Natural killer cell (primary cell): ENCODE measurements at regions of chr9 and their contacts with region 1.

Region 1: DNA sequence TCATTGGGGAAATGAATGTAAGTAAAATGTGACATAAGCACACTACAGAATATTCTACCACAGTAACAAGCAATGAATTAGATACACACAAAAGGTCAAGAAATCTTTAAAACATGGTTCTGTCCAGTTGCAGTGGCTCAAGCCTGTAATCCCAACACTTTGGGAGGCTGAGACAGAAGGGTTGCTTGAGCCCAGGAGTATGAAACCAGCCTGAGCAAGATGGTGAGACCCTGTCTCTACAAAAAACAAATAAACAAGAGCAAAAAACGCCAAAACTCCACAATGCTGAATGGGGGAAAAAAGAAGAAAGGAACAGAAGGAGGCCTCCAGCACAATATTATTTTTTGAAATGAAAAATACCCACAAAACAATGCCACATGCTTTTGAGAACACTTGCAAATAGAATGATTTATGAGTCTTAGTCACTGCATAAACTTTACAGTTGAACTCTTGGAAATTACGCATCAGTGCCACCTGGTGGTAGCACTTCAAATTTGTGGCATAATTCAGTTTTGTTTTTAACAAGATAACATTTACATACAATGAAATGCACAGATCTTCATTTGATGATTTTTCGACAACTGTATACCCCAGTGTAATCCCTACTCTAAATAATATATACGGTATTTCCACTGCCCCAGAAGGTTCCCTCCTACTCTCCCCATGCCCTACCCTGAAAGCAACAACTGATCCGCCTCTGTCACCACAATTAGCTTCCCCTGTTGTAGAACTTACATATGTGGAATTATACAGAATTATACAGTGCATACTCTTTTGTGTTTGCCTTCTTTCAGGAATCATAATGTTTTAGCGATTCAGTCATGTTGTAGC is 14.4 kb upstream of the SPINK4 start:
- DNase-seq: peak; percentile 49 to 88
- ATAC-seq: peak; percentile 71 to 88 (median 77)
- H3K4me3 ChIP-seq: no peak overlapping the region
- H3K4me3 Mint-ChIP-seq: no peak overlapping the region
- H3K27ac ChIP-seq: no peak overlapping the region
- H3K27ac Mint-ChIP-seq: peak overlapping the region in 1 of 2 donors; percentile 40
- H3K4me1 ChIP-seq: peaks cover 19% of the 10 kb centered on the region
- H3K4me1 Mint-ChIP-seq: peaks cover 9 to 19% of the 10 kb centered on the region in 2 donors
- H3K27me3 ChIP-seq: no peaks in the 10 kb centered on the region
- H3K27me3 Mint-ChIP-seq: no peaks in the 10 kb centered on the region
- CTCF ChIP-seq: peak; percentile 90

Region 2: DNA sequence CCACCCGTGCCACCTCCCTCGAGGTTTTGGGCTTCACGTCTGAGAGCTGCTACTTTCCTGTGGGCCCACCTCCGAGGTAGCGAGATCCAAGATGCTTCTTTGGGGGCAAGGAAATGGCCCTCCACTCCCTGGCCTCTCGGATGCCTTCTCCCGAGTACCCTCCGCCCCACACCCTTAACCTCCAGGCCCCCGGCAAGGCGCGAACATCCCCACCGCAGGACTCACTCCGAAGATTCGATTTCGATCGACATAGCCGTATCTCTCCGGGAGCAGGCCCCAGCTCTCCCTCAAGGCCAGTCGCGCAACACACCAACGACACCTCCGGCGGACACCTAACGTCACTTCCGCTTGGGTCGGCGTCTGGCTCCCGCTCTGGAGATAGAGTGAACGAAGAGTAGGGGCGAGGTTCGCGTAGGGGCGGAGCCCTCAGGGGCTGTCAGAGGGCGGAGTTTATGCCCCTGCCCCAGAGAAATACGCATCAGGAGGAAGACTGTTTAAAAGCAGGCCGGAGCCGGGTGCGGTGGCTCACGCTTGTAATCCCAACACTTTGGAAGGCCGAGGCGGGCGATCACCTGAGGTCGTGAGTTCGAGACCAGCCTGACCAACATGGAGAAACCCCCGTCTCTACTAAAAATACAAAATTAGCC is 149.1 kb before region 1 on chr9 and contains the start of gene SMU1:
- intact Hi-C with region 1: loop called (anchors 1 kb)
- DNase-seq: peak; percentile 90 to 98
- ATAC-seq: peak; percentile 94 to 99 (median 95)
- H3K4me3 ChIP-seq: peak within 1 kb of the TSS; percentile 53
- H3K4me3 Mint-ChIP-seq: peak within 1 kb of the TSS; percentile 96
- H3K27ac ChIP-seq: peak within 1 kb of the TSS; percentile 88
- H3K27ac Mint-ChIP-seq: peak within 1 kb of the TSS; percentile 93 to 99
- H3K4me1 ChIP-seq: peaks cover 17% of the 10 kb centered on the region
- H3K4me1 Mint-ChIP-seq: peaks cover 22 to 23% of the 10 kb centered on the region in 2 donors
- H3K27me3 ChIP-seq: no peaks in the 10 kb centered on the region
- H3K27me3 Mint-ChIP-seq: no peaks in the 10 kb centered on the region
- CTCF ChIP-seq: no peak
- total RNA-seq, gene SMU1: 21.9 to 23.2 (median 22.1) TPM

Region 3: GRCh38 chr9:33130508-33130911 is 95.0 kb before region 1 on chr9:
- intact Hi-C with region 1: loop called (anchors 1 kb)
- DNase-seq: peak; percentile 49 to 53
- ATAC-seq: peak; percentile 83 to 93 (median 86)
- H3K4me3 ChIP-seq: no peak overlapping the region
- H3K4me3 Mint-ChIP-seq: peak overlapping the region; percentile 88
- H3K27ac ChIP-seq: peak overlapping the region; percentile 82
- H3K27ac Mint-ChIP-seq: peak overlapping the region; percentile 97 to 98
- H3K4me1 ChIP-seq: peaks cover 75% of the 10 kb centered on the region
- H3K4me1 Mint-ChIP-seq: peaks cover 75 to 87% of the 10 kb centered on the region in 2 donors
- H3K27me3 ChIP-seq: no peaks in the 10 kb centered on the region
- H3K27me3 Mint-ChIP-seq: no peaks in the 10 kb centered on the region
- CTCF ChIP-seq: no peak

Region 4: GRCh38 chr9:33180526-33181184 is 44.9 kb before region 1 on chr9:
- intact Hi-C with region 1: loop called (anchors 5 kb)
- DNase-seq: no peak
- ATAC-seq: peak in 1 of 3 donors; percentile 29
- H3K4me3 ChIP-seq: no peak overlapping the region
- H3K4me3 Mint-ChIP-seq: no peak overlapping the region
- H3K27ac ChIP-seq: no peak overlapping the region
- H3K27ac Mint-ChIP-seq: no peak overlapping the region
- H3K4me1 ChIP-seq: no peaks in the 10 kb centered on the region
- H3K4me1 Mint-ChIP-seq: peaks cover 9 to 10% of the 10 kb centered on the region in 2 donors
- H3K27me3 ChIP-seq: no peaks in the 10 kb centered on the region
- H3K27me3 Mint-ChIP-seq: no peaks in the 10 kb centered on the region
- CTCF ChIP-seq: no peak

Region 5: DNA sequence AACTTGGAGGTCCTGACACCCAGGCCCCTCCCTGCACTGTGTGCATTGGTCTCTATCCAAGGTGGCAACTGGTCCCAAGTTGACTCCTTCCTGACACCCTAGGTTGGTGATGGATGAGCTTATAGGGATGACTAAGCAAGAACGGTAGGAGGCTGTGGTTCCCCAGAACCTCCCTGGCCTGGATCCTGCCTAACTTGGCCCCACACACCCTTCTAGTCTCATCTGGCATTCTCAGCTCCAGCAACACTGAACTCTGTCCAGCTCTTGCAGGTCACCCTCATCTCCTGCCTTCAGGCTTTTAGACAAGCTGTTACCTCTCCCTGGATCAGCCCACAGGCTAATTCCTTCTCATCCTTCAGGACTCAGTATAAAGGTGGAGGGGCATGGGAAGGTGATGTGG is 205.4 kb after region 1 on chr9:
- intact Hi-C with region 1: no loop called
- DNase-seq: no peak
- ATAC-seq: no peak
- H3K4me3 ChIP-seq: no peak overlapping the region
- H3K4me3 Mint-ChIP-seq: no peak overlapping the region
- H3K27ac ChIP-seq: no peak overlapping the region
- H3K27ac Mint-ChIP-seq: no peak overlapping the region
- H3K4me1 ChIP-seq: peaks cover 18% of the 10 kb centered on the region
- H3K4me1 Mint-ChIP-seq: peaks cover 0 to 14% of the 10 kb centered on the region in 2 donors
- H3K27me3 ChIP-seq: no peaks in the 10 kb centered on the region
- H3K27me3 Mint-ChIP-seq: no peaks in the 10 kb centered on the region
- CTCF ChIP-seq: no peak